ENCODE measurements at regions of chr17 and their contacts with region 1.

Region 1: GRCh38 chr17:66165513-66166123 is 26.3 kb downstream of the CEP112 start:
- DNase-seq: peak in 1 of 2 experiments; percentile 55
- H3K4me3 ChIP-seq: no peak overlapping the region
- H3K4me3 Mint-ChIP-seq: no peak overlapping the region
- H3K27ac Mint-ChIP-seq: no peak overlapping the region
- H3K4me1 ChIP-seq: no peaks in the 10 kb centered on the region
- H3K4me1 Mint-ChIP-seq: no peaks in the 10 kb centered on the region
- H3K27me3 ChIP-seq: no peaks in the 10 kb centered on the region
- H3K27me3 Mint-ChIP-seq: no peaks in the 10 kb centered on the region
- CTCF ChIP-seq: peak; percentile 63 to 76

Region 2: GRCh38 chr17:65231662-65232335 is 933.8 kb before region 1 on chr17:
- CTCF ChIA-PET with region 1: interaction called, 16 read pairs
- POLR2A ChIA-PET with region 1: no interaction called
- intact Hi-C with region 1: loop called (anchors 1 kb)
- DNase-seq: peak; percentile 65 to 77
- H3K4me3 ChIP-seq: no peak overlapping the region
- H3K4me3 Mint-ChIP-seq: no peak overlapping the region
- H3K27ac Mint-ChIP-seq: no peak overlapping the region
- H3K4me1 ChIP-seq: peaks cover 15% of the 10 kb centered on the region
- H3K4me1 Mint-ChIP-seq: peaks cover 27% of the 10 kb centered on the region
- H3K27me3 ChIP-seq: no peaks in the 10 kb centered on the region
- H3K27me3 Mint-ChIP-seq: peaks cover 1% of the 10 kb centered on the region
- CTCF ChIP-seq: peak; percentile 76 to 88

Region 3: GRCh38 chr17:65278050-65278819 is 887.4 kb before region 1 on chr17:
- CTCF ChIA-PET with region 1: no interaction called
- POLR2A ChIA-PET with region 1: no interaction called
- intact Hi-C with region 1: loop called (anchors 1 kb)
- DNase-seq: peak; percentile 81 to 82
- H3K4me3 ChIP-seq: no peak overlapping the region
- H3K4me3 Mint-ChIP-seq: peak overlapping the region; percentile 39
- H3K27ac Mint-ChIP-seq: no peak overlapping the region
- H3K4me1 ChIP-seq: peaks cover 14% of the 10 kb centered on the region; the same call in 1 of the 2 replicates
- H3K4me1 Mint-ChIP-seq: peaks cover 9% of the 10 kb centered on the region
- H3K27me3 ChIP-seq: no peaks in the 10 kb centered on the region
- H3K27me3 Mint-ChIP-seq: peaks cover 4% of the 10 kb centered on the region
- CTCF ChIP-seq: peak; percentile 82 to 89

Region 4: GRCh38 chr17:65294179-65294720 is 871.4 kb before region 1 on chr17:
- CTCF ChIA-PET with region 1: interaction called, 7 read pairs
- POLR2A ChIA-PET with region 1: no interaction called
- intact Hi-C with region 1: loop called (anchors 5 kb)
- DNase-seq: peak; percentile 74 to 78
- H3K4me3 ChIP-seq: no peak overlapping the region
- H3K4me3 Mint-ChIP-seq: no peak overlapping the region
- H3K27ac Mint-ChIP-seq: peak overlapping the region; percentile 25
- H3K4me1 ChIP-seq: peaks cover 13% of the 10 kb centered on the region; the same call in 1 of the 2 replicates
- H3K4me1 Mint-ChIP-seq: peaks cover 15% of the 10 kb centered on the region
- H3K27me3 ChIP-seq: no peaks in the 10 kb centered on the region
- H3K27me3 Mint-ChIP-seq: no peaks in the 10 kb centered on the region
- CTCF ChIP-seq: peak; percentile 88 to 90

Region 5: GRCh38 chr17:65446838-65447526 is 718.6 kb before region 1 on chr17:
- CTCF ChIA-PET with region 1: no interaction called
- POLR2A ChIA-PET with region 1: no interaction called
- intact Hi-C with region 1: loop called (anchors 5 kb)
- DNase-seq: no peak
- H3K4me3 ChIP-seq: no peak overlapping the region
- H3K4me3 Mint-ChIP-seq: no peak overlapping the region
- H3K27ac Mint-ChIP-seq: no peak overlapping the region
- H3K4me1 ChIP-seq: no peaks in the 10 kb centered on the region
- H3K4me1 Mint-ChIP-seq: no peaks in the 10 kb centered on the region
- H3K27me3 ChIP-seq: no peaks in the 10 kb centered on the region
- H3K27me3 Mint-ChIP-seq: peaks cover 3% of the 10 kb centered on the region
- CTCF ChIP-seq: no peak

Region 6: GRCh38 chr17:65941432-65941831 is 224.2 kb before region 1 on chr17:
- CTCF ChIA-PET with region 1: no interaction called
- POLR2A ChIA-PET with region 1: no interaction called
- intact Hi-C with region 1: no loop called
- DNase-seq: no peak
- H3K4me3 ChIP-seq: no peak overlapping the region
- H3K4me3 Mint-ChIP-seq: no peak overlapping the region
- H3K27ac Mint-ChIP-seq: no peak overlapping the region
- H3K4me1 ChIP-seq: no peaks in the 10 kb centered on the region
- H3K4me1 Mint-ChIP-seq: no peaks in the 10 kb centered on the region
- H3K27me3 ChIP-seq: no peaks in the 10 kb centered on the region
- H3K27me3 Mint-ChIP-seq: peaks cover 4% of the 10 kb centered on the region
- CTCF ChIP-seq: no peak

Region 7: DNA sequence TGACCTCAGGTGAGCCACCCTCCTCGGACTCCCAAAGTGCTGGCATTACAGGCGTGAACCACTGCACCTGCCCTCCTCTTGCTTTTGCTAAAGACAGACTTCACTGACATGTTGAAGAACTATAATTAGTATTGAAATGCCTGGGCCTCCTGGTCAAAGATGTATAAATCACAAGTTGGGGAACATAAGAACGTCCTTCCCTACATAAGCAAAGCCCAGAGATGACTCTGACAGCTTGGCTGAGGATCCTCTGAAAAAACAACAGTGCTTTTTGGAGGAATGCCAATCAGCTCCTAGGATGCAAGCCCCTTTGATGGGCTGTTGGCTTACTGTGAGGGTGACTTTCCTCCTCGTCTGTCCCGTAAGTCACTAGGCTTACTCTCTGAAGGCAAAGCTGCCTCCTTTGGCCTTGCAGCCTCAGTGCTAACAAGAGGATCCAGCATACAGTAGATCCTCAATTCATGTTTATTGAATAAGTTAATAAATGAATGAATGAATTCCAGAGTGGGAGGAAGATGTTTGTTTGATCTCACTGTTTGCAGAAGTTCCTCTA is 57.3 kb after region 1 on chr17:
- CTCF ChIA-PET with region 1: no interaction called
- POLR2A ChIA-PET with region 1: no interaction called
- intact Hi-C with region 1: no loop called
- DNase-seq: no peak
- H3K4me3 ChIP-seq: no peak overlapping the region
- H3K4me3 Mint-ChIP-seq: no peak overlapping the region
- H3K27ac Mint-ChIP-seq: no peak overlapping the region
- H3K4me1 ChIP-seq: peaks cover 2% of the 10 kb centered on the region; the same call in 1 of the 2 replicates
- H3K4me1 Mint-ChIP-seq: peaks cover 7% of the 10 kb centered on the region
- H3K27me3 ChIP-seq: no peaks in the 10 kb centered on the region
- H3K27me3 Mint-ChIP-seq: no peaks in the 10 kb centered on the region
- CTCF ChIP-seq: no peak